GM12878 (cell line): ENCODE measurements at regions of chr4 and their contacts with region 1.

Region 1: DNA sequence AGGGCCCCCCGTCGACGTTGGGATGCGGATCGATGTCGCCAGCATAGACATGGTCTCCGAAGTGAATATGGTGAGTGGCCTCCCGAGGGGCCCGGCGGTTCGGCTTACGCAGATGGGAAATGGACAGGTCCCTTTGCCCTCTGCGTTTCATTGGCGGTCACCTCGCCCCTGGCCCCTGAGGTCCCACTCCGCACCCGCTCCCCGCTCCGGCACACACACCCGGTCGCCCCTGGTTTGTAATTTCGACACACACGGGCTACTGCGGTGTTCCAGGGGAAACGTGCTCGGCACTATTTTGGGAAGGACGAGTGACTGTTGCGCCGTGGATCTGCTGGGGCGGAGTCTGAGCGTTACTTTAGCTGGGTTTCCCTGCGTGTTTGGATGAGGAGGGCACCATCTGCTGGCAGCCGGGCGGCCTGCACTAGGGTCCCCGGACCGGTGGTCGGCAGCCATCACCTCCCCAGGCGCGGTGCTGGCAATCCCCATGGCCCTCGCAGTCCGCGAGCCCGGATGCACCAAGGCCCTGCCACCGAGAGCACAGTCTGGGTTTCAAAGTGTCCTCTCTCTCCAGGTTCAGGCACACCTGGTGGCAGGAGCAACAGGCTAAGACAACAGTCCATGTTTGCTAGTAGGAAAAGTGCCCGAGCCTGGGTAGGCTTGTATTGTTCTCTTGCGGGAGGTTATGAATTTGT is 1.2 kb downstream of the GABRB1 start:
- DNase-seq: no peak
- ATAC-seq: peak; percentile 98
- H3K4me3 ChIP-seq: peak overlapping the region; percentile 21; the same call in 1 of the 2 replicates
- H3K27ac ChIP-seq: no peak overlapping the region
- H3K4me1 ChIP-seq: no peaks in the 10 kb centered on the region
- H3K27me3 ChIP-seq: peaks cover 2 to 10% of the 10 kb centered on the region in 2 experiments
- CTCF ChIP-seq: peak; percentile 62 to 83 (median 78)
- EP300 ChIP-seq: no peak
- POLR2A ChIP-seq: no peak
- RAD21 ChIP-seq: peak; percentile 71

Region 2: GRCh38 chr4:46484881-46485280 is 547.7 kb before region 1 on chr4:
- CTCF ChIA-PET with region 1: no interaction called
- POLR2A ChIA-PET with region 1: no interaction called
- RAD21 ChIA-PET with region 1: no interaction called
- SMC1A ChIA-PET with region 1: no interaction called
- in situ Hi-C with region 1: no loop called
- intact Hi-C with region 1: no loop called
- DNase-seq: no peak
- ATAC-seq: no peak
- H3K4me3 ChIP-seq: no peak overlapping the region
- H3K27ac ChIP-seq: no peak overlapping the region
- H3K4me1 ChIP-seq: no peaks in the 10 kb centered on the region
- H3K27me3 ChIP-seq: no peaks in the 10 kb centered on the region
- CTCF ChIP-seq: no peak
- EP300 ChIP-seq: no peak
- POLR2A ChIP-seq: no peak
- RAD21 ChIP-seq: no peak

Region 3: GRCh38 chr4:47054130-47054529 is 21.6 kb after region 1 on chr4:
- CTCF ChIA-PET with region 1: interaction called, 10 read pairs
- POLR2A ChIA-PET with region 1: interaction called, 3 read pairs
- RAD21 ChIA-PET with region 1: interaction called, 4 read pairs
- SMC1A ChIA-PET with region 1: interaction called, 4 read pairs
- in situ Hi-C with region 1: no loop called
- intact Hi-C with region 1: no loop called
- DNase-seq: no peak
- ATAC-seq: peak; percentile 77
- H3K4me3 ChIP-seq: no peak overlapping the region
- H3K27ac ChIP-seq: no peak overlapping the region
- H3K4me1 ChIP-seq: no peaks in the 10 kb centered on the region
- H3K27me3 ChIP-seq: no peaks in the 10 kb centered on the region
- CTCF ChIP-seq: no peak
- EP300 ChIP-seq: no peak
- POLR2A ChIP-seq: no peak
- RAD21 ChIP-seq: no peak

Region 4: DNA sequence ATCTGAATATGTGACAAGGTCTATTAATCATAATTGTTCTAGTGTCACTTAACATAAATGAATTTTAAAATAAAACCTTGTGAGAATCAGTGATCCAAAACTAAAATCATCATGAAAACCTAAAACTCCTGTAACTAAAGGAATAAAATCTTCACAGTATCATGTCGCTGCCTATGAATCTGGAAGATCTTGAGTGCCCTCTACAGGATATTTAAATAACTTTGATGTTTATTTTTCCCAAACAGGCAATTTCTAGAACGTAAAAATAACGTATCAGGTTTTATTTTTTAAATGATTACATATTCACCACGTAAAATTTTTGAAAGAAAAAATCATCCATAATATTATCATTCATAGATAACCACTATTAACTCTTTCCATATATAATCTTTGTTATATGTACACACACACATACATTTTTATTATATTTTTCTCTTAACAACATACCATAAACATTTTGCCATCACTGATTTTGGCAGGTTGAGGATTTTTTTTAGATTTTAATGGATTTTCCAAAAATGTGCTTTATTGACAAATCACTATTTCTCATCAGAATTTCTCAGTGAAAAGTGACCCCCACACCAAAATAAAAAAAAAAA is 351.4 kb after region 1 on chr4:
- CTCF ChIA-PET with region 1: interaction called, 6 read pairs
- POLR2A ChIA-PET with region 1: no interaction called
- RAD21 ChIA-PET with region 1: no interaction called
- SMC1A ChIA-PET with region 1: no interaction called
- in situ Hi-C with region 1: no loop called
- intact Hi-C with region 1: loop called (anchors 5 kb)
- DNase-seq: no peak
- ATAC-seq: peak; percentile 44; the same call in 2 of the 3 replicates
- H3K4me3 ChIP-seq: no peak overlapping the region
- H3K27ac ChIP-seq: no peak overlapping the region
- H3K4me1 ChIP-seq: no peaks in the 10 kb centered on the region
- H3K27me3 ChIP-seq: no peaks in the 10 kb centered on the region
- CTCF ChIP-seq: peak; percentile 19 to 59 (median 37); a peak in 4 of 6 replicates
- EP300 ChIP-seq: no peak
- POLR2A ChIP-seq: no peak
- RAD21 ChIP-seq: peak; percentile 83